HEK293 (cell line): ENCODE measurements at regions of chr12 and their contacts with region 1.

Region 1: DNA sequence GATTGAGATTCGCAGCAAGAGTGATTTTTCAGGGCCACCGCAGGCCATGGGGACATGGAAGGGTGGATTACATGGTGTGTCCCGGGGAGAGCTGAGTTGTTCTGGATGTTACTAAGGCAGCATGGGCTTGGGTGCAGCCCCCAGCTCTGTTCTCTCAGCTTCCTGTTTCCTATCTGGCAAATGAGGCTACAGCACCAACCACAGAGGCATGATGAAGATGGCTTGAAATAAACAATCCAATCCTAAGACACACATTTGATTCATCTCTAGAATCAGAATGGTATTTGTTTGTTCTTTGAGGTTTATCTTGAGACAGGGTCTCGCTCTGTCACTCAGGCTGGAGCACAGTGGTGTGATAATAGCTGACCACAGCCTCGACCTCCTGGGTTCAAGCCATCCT is 21.6 kb downstream of the GLTP start:
- H3K4me3 ChIP-seq: no peak overlapping the region
- H3K27ac ChIP-seq: no peak overlapping the region
- H3K4me1 ChIP-seq: peaks cover 4% of the 10 kb centered on the region; the same call in 1 of the 2 replicates
- CTCF ChIP-seq: no peak

Region 2: DNA sequence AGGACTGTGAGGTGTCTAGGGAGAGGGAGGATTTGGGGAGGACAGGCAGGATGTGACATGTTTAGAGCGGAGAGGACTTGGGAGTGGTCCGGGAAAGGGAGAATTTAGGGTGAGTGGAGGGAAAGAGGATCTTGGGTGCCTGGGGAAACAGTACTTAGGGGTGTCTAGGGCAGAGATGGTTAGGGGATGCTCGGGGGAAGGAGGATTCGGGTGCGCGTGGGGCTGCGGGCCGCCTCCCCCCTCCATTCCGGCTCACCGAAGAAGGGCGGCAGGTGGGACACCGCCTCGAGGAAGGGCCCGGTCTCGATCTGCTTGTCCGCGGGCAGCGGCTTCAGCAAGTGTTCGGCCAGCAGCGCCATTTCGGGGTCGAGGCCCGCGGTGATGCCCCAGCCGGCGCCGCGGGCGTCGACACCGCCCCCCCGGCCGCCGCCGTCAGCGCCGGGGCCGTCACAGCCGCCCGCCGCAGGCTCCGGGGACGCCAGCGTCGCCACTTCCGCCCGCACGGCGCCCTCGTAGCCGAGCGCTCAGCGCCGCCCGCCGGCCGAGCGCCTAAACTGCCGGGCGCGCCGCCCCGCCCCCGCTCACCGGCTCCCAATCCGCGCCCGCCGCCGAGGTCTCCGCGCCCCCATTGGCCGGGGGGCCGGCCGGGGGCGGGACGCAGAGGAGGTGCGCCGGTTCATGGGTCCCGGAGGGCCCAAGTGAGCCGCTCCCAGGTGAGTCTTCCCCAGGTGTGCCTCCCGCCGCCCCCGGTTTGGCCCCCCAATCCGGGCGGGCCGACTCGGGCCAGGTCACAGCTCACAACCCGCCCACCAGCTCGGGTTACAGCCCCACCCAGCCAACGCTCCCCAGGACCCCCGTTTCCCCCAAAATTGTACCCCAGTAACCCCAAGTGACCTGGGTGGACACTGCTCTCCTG is 21.5 kb after region 1 on chr12 and contains the start of gene GLTP:
- CTCF ChIA-PET with region 1: interaction called, 42 read pairs
- POLR2A ChIA-PET with region 1: no interaction called
- H3K4me3 ChIP-seq: peak within 1 kb of the TSS; percentile 71
- H3K27ac ChIP-seq: peak within 1 kb of the TSS; percentile 51; the same call in 1 of the 2 replicates
- H3K4me1 ChIP-seq: peaks cover 8% of the 10 kb centered on the region
- CTCF ChIP-seq: peak; percentile 62

Region 3: DNA sequence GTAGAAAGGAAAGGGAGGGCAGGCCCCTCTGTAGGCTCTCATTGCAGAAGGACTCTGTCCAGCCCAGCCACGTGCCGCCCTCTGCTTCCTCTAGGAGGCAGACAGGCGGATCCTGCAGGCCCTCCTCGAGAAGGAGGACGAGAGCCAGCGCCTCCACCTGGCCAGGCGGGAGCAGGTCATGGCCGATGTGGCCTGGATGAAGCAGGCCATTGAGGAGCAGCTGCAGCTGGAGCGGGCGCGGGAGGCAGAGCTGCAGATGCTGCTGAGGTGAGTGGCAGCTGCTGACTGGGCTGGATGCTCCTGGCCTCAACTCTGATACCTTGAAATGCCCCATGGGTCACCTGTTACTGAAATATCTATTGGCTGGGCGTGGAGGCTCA is 52.2 kb after region 1 on chr12:
- CTCF ChIA-PET with region 1: interaction called, 12 read pairs
- POLR2A ChIA-PET with region 1: no interaction called
- H3K4me3 ChIP-seq: no peak overlapping the region
- H3K27ac ChIP-seq: no peak overlapping the region
- H3K4me1 ChIP-seq: no peaks in the 10 kb centered on the region
- CTCF ChIP-seq: peak; percentile 37; the same call in 1 of the 2 replicates

Region 4: DNA sequence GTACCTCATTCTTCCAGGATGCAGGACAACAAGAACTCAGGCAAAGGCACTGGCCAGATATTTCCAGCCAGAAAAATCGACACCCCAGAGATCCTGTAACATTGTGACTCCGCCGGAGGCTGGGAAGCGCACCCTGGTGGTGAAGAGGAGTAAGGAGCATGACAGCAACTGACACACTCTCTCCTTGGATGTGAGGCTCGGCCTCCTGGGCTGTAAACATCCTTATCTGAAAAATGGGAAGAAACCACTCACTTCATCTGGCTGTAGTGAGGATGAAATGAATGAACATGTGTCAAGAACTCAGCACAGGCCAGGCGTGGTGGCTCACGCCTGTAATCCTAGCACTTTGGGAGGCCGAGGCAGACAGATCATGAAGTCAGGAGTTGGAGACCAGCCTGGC is 68.9 kb after region 1 on chr12:
- CTCF ChIA-PET with region 1: interaction called, 27 read pairs
- POLR2A ChIA-PET with region 1: no interaction called
- H3K4me3 ChIP-seq: no peak overlapping the region
- H3K27ac ChIP-seq: no peak overlapping the region
- H3K4me1 ChIP-seq: no peaks in the 10 kb centered on the region
- CTCF ChIP-seq: peak; percentile 55

Region 5: GRCh38 chr12:109995686-109996482 is 137.1 kb after region 1 on chr12 and contains the start of gene GIT2:
- CTCF ChIA-PET with region 1: no interaction called
- POLR2A ChIA-PET with region 1: no interaction called
- H3K4me3 ChIP-seq: peak within 1 kb of the TSS; percentile 98
- H3K27ac ChIP-seq: peak within 1 kb of the TSS; percentile 67; the same call in 1 of the 2 replicates
- H3K4me1 ChIP-seq: no peaks in the 10 kb centered on the region
- CTCF ChIP-seq: peak; percentile 43; the same call in 1 of the 2 replicates